Psoas muscle (tissue), 8 donors: ENCODE measurements at regions of chr1 and their contacts with region 1.

Region 1: DNA sequence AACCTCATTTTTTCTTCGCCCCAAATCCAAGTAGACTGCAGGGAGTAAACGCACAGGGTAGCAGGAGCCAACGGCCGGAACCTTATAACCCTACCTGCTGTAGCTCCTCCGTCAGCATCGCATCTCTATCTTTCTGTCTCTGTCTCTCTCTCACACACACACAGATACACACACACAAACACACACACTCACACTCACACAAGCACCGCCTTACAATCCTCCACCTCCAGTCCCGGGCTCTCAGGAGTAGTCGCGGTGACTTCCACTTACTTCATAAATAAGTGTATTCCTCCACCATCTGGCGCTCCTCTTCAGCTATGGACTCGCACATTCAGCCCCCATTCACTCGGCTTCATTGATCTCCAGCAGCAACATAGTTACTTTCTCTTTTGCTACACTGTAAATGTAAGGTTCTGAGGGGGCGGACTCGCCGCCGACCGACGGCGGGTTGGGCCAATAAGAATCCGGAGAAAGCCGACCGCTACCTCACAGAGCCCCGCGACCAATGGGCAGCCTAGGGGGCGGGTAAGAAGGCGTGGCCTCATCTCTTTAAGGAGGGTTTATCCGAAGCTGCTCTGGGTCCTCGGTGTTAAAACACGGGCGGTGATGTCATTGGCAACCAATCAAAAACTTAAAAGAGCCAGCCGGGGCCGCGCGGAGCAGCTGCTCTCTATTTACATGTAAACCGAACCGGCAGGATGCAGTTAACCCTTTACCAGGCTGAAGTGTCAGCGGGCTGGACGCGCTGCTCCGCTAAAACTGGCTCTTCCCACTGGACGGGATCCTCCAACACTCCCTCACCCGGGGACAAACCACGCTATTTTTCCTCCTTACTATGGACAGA is at the start of gene DUSP10:
- DNase-seq: peak; percentile 98
- ATAC-seq: peak; percentile 90 to 93 (median 90)
- H3K4me3 ChIP-seq: peak within 1 kb of the TSS; percentile 80
- H3K27ac ChIP-seq: peak within 1 kb of the TSS; percentile 99
- H3K4me1 ChIP-seq: peaks cover 33% of the 10 kb centered on the region
- H3K27me3 ChIP-seq: no peaks in the 10 kb centered on the region
- CTCF ChIP-seq: no peak
- total RNA-seq, gene DUSP10: 5.2 to 15.5 (median 9.3) TPM

Region 2: GRCh38 chr1:221462345-221462744 is 279.6 kb before region 1 on chr1:
- intact Hi-C with region 1: loop called in 1 of 2 experiments (anchors 10 kb)
- DNase-seq: no peak
- ATAC-seq: peak in 3 of 4 donors; percentile 70 to 89 (median 75)
- H3K4me3 ChIP-seq: no peak overlapping the region
- H3K27ac ChIP-seq: peak overlapping the region; percentile 88
- H3K4me1 ChIP-seq: peaks cover 44% of the 10 kb centered on the region
- H3K27me3 ChIP-seq: no peaks in the 10 kb centered on the region
- CTCF ChIP-seq: no peak

Region 3: GRCh38 chr1:221612264-221612777 is 129.6 kb before region 1 on chr1:
- intact Hi-C with region 1: loop called (anchors 5 kb)
- DNase-seq: peak; percentile 62 to 81
- ATAC-seq: peak; percentile 94 to 100 (median 96)
- H3K4me3 ChIP-seq: no peak overlapping the region
- H3K27ac ChIP-seq: peak overlapping the region; percentile 59
- H3K4me1 ChIP-seq: peaks cover 13% of the 10 kb centered on the region
- H3K27me3 ChIP-seq: no peaks in the 10 kb centered on the region
- CTCF ChIP-seq: no peak

Region 4: GRCh38 chr1:222009105-222009730 is 267.3 kb after region 1 on chr1:
- intact Hi-C with region 1: loop called in 1 of 2 experiments (anchors 10 kb)
- DNase-seq: no peak
- ATAC-seq: peak; percentile 48 to 73 (median 55)
- H3K4me3 ChIP-seq: no peak overlapping the region
- H3K27ac ChIP-seq: no peak overlapping the region
- H3K4me1 ChIP-seq: no peaks in the 10 kb centered on the region
- H3K27me3 ChIP-seq: no peaks in the 10 kb centered on the region
- CTCF ChIP-seq: peak; percentile 44

Region 5: GRCh38 chr1:222171005-222171404 is 429.1 kb after region 1 on chr1:
- intact Hi-C with region 1: loop called in 1 of 2 experiments (anchors 10 kb)
- DNase-seq: no peak
- ATAC-seq: peak; percentile 78 to 87 (median 82)
- H3K4me3 ChIP-seq: no peak overlapping the region
- H3K27ac ChIP-seq: no peak overlapping the region
- H3K4me1 ChIP-seq: no peaks in the 10 kb centered on the region
- H3K27me3 ChIP-seq: no peaks in the 10 kb centered on the region
- CTCF ChIP-seq: peak; percentile 65